Mammary epithelial cell (primary cell): ENCODE measurements at regions of chr20 and their contacts with region 1.

Region 1: GRCh38 chr20:17904027-17904426 is 64.6 kb downstream of the SNX5 start:
- DNase-seq: no peak
- H3K4me3 ChIP-seq: no peak overlapping the region
- H3K27ac ChIP-seq: no peak overlapping the region
- H3K4me1 ChIP-seq: no peaks in the 10 kb centered on the region
- H3K27me3 ChIP-seq: no peaks in the 10 kb centered on the region
- CTCF ChIP-seq: no peak

Region 2: DNA sequence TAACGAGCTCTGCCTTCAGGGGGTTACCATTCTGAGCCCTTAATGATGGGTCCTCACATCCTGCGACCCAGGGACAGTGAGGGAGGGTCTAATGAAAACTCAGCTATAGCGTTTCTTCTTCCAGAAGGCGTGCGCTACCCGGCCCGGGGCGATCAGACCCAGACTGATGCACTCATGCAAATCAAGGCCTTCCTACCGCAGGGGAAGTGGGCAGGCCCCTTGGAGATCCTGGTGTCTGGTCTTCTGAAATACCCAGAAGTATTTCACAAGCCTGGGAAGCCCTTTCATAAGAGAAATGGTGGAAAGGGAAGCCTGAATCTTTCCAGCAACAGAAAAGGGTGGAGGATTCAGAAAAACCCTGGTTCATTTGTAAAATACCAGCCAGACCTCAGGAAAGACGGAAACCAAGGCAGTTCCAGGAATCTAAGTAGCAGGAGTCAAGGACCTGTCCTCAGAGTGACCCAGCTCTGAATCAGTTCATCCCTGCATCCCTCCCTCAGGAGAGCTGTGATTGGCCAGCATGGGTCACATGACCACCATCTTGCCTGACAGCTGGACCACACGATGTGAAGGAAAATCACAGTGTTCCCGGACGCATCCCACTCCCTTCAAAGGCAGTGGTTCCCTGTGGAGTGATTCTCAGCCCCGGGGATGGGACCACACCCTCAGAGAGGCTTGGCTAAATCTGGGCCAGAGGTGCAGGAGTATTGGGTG is 385.5 kb before region 1 on chr20:
- CTCF ChIA-PET with region 1: no interaction called
- dilution Hi-C with region 1: no loop called
- in situ Hi-C with region 1: loop called in 1 of 2 experiments (anchors 10 kb)
- intact Hi-C with region 1: no loop called
- DNase-seq: no peak
- H3K4me3 ChIP-seq: no peak overlapping the region
- H3K27ac ChIP-seq: no peak overlapping the region
- H3K4me1 ChIP-seq: peaks cover 4% of the 10 kb centered on the region
- H3K27me3 ChIP-seq: no peaks in the 10 kb centered on the region
- CTCF ChIP-seq: no peak